Heart left ventricle (tissue), 16 donors: ENCODE measurements at regions of chr20 and their contacts with region 1.

Region 1: GRCh38 chr20:18587665-18588573 is at the start of gene DTD1:
- DNase-seq: peak; percentile 93 to 98 (median 96)
- ATAC-seq: peak; percentile 87 to 99 (median 98)
- H3K4me3 ChIP-seq: peak within 1 kb of the TSS; percentile 71 to 98 (median 88)
- H3K27ac ChIP-seq: peak within 1 kb of the TSS in 11 of 12 donors; percentile 65 to 90 (median 80)
- H3K4me1 ChIP-seq: peaks cover 0 to 16% (median 6%) of the 10 kb centered on the region in 12 donors
- H3K27me3 ChIP-seq: no peaks in the 10 kb centered on the region
- CTCF ChIP-seq: peak; percentile 54 to 88 (median 72)
- POLR2A ChIP-seq: peak in 1 of 2 donors; percentile 62
- total RNA-seq, gene DTD1: 12.1 to 20.8 (median 15.6) TPM

Region 2: GRCh38 chr20:17518339-17519052 is 1069.4 kb before region 1 on chr20:
- intact Hi-C with region 1: loop called in 1 of 10 experiments (anchors 10 kb)
- DNase-seq: peak in 1 of 5 donors; percentile 45
- ATAC-seq: peak in 3 of 4 donors; percentile 44 to 66 (median 50)
- H3K4me3 ChIP-seq: no peak overlapping the region
- H3K27ac ChIP-seq: no peak overlapping the region
- H3K4me1 ChIP-seq: peaks cover 0 to 14% (median 0%) of the 10 kb centered on the region in 12 donors
- H3K27me3 ChIP-seq: no peaks in the 10 kb centered on the region
- CTCF ChIP-seq: no peak
- POLR2A ChIP-seq: no peak